ENCODE measurements at regions of chr7 and their contacts with region 1.

Region 1: DNA sequence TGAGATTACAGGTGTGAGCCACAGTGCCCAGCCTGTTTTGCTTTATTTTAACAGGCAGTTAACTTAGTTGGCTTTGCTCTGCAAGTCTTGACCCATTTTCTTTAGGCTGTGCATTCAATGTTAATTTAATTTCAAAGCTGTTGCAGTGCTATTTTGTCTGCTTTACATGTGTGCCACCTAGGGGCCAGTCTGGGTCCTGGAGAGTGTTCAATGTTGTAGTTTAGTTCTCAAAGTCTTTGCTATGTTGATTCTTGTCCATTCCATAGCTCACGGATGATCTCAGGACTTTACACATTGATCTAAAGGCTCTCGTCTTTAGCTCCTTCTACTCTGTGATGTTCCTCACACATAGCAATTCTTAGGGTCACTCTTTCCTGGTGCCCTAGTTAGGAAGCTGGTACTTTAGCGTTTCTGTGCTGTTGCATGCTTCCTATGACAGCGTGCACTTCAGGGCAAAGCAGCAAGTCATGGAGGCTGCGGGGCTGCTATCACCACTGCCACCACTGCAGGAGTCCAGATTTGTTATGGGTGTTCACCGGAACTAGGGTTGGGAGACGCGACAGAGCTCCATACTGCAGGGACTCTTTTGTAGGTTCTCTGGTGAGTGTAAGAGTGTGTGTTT is 16.4 kb upstream of the ABCA13 start:
- DNase-seq: no peak
- H3K4me3 ChIP-seq: no peak overlapping the region
- H3K27ac ChIP-seq: no peak overlapping the region
- H3K27me3 ChIP-seq: no peaks in the 10 kb centered on the region
- CTCF ChIP-seq: peak; percentile 79

Region 2: DNA sequence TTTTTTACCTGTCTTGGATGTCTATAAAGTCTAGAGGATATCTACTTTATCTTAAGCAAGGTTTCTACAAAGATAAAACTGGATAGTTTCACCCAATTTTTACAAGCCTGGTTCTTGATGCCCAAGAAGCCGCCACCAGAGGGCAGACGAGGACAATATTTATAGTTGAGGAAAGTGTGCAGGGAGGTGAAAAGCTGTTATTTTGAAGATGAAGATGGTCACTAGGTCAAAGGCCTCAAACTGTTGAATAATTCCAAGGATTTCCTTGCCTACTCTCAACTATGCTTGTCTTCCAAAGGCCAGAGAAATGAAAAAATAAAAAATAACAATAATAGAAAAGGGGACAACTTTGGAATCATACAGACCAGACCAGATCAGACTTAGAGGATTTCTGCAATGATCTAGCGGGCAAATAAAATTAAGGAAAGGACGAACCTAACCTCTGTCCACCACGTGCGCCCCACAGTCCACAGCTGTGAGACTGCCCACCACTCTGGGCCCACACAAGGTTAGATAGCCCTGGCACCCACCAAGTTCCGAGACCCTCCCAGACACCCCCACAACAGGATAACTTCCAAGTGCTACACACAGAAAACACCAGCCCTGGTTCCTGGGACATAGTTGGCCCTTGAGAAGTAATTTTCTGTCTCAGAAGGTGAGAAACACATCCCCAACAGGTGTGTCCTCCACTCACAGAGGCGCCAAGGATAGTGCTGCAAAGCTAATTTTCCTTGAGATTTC is 209.5 kb before region 1 on chr7:
- CTCF ChIA-PET with region 1: interaction called, 58 read pairs
- POLR2A ChIA-PET with region 1: no interaction called
- DNase-seq: no peak
- H3K4me3 ChIP-seq: no peak overlapping the region
- H3K27ac ChIP-seq: no peak overlapping the region
- H3K27me3 ChIP-seq: no peaks in the 10 kb centered on the region
- CTCF ChIP-seq: peak; percentile 75

Region 3: DNA sequence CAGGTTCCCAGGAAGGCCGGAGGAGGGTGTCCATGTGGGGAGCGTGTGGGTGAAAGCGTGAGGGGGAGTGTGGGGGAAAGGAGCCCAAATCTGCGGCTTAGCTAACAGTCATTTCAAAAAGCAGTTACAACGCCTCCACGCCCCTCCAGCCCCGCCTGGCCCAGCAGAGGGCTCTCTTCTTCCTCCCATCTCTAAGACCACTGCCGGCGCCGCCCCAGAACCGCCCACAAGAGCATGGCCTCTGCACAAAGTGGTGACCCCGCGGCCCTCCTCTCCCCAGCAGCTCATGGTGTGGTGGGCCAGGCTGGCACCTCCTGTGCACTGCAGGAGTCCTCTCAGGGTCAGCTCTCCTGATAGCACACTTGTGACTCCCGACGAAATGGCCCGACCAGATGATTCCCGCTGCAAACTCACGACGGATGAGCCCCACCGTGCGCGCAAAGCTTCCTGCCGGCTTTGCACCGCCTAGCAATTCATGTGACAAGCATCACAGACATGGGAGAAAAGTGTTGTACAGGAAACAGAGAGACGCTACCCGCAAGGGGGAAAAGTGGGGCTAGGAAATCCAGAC is 163.1 kb before region 1 on chr7:
- CTCF ChIA-PET with region 1: interaction called, 29 read pairs
- POLR2A ChIA-PET with region 1: no interaction called
- DNase-seq: no peak
- H3K4me3 ChIP-seq: peak overlapping the region; percentile 67
- H3K27ac ChIP-seq: no peak overlapping the region
- H3K27me3 ChIP-seq: no peaks in the 10 kb centered on the region
- CTCF ChIP-seq: peak; percentile 77

Region 4: DNA sequence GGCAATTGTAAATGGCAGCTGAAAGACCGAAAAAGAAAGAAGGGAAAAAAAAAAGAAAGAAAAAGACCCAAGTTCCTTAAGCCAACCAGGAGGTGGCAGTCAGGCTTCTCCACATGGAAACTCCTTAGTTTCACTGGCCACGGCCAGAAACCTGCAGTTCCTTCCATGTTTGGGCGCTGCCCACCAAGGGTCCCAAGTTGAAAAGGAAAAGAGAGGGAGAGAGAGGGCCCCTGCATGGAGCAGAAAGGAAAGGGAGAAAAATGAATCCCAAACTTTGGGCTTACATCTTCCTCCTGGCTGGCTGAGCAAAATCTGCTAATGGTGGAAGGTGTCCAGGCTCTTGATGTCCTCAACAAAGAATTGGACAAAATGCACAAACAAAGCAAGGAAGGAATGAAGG is 15.4 kb before region 1 on chr7:
- CTCF ChIA-PET with region 1: interaction called, 20 read pairs
- POLR2A ChIA-PET with region 1: no interaction called
- DNase-seq: no peak
- H3K4me3 ChIP-seq: no peak overlapping the region
- H3K27ac ChIP-seq: no peak overlapping the region
- H3K27me3 ChIP-seq: no peaks in the 10 kb centered on the region
- CTCF ChIP-seq: peak; percentile 57

Region 5: DNA sequence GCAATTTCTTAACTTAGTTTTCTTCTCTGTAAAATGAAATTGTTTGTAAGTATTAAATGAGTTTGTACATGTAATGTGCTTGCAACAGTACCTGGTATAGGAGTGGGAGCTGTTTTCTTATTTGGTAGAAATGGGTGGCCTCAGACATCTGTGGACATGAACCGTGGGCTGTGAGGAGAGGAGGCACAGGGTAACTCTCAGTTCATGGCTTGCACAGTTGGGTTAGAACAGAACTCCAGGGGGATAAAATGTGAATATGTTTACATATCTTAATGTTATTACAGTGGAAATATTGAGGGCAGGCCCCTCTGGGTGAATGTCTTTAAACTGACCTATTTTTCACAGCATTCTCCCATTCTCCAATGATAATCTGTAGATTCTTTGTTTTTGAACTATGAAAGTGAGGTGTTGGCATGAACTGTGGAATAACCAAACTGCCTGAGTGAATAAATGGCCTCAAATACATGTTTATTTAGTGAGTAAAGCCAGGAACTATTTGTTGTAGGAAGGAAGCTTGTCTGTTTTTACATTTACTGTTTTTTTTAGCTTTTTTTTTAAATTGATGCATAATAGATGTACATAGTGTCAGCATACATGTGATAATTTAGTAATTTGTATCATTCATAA is 19.0 kb after region 1 on chr7:
- CTCF ChIA-PET with region 1: interaction called, 20 read pairs
- POLR2A ChIA-PET with region 1: no interaction called
- DNase-seq: no peak
- H3K4me3 ChIP-seq: no peak overlapping the region
- H3K27ac ChIP-seq: no peak overlapping the region
- H3K27me3 ChIP-seq: no peaks in the 10 kb centered on the region
- CTCF ChIP-seq: no peak

Measured in AG04450 (cell line).